Right ventricle myocardium inferior (tissue), 1 donor: ENCODE measurements at regions of chr7 and their contacts with region 1.

Region 1: GRCh38 chr7:135662373-135663114 is at the start of gene STMP1:
- DNase-seq: peak; percentile 98
- ATAC-seq: peak; percentile 98
- total RNA-seq, gene STMP1: 27.4 TPM

Region 2: DNA sequence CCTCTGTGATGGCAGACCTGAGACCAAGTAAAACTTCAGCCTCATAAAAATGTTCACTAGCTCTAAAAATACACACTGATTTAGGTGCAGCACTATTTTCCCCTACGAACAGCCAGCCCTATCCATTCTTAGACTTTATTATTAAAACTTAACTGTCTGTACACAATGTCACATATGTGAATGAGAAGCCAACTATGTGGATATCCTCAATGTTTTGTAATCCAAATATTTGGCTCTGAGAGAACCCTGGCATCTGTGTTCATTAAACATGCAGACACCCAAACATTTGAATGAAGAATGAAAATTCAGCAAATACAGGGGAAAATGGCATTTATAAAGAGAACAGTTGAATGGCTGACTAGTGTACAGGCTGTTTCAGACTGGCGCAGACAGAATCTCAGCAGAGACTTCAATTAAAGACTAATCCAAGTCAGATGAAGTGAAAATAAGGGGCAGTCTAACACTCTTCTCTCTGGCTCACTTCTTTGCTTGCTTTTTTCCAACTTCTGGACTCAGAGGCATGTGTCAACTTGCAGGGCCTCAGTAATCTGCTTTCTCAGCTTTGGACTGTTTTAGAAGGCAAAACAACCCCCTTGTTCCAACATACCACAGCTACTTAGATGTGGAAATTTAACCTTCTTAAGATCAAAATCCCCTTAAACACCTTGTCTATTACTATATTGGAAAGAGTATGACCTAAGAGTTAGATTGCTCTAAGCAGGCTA is 133.5 kb after region 1 on chr7:
- intact Hi-C with region 1: loop called (anchors 2 kb)
- DNase-seq: no peak
- ATAC-seq: no peak

Region 3: DNA sequence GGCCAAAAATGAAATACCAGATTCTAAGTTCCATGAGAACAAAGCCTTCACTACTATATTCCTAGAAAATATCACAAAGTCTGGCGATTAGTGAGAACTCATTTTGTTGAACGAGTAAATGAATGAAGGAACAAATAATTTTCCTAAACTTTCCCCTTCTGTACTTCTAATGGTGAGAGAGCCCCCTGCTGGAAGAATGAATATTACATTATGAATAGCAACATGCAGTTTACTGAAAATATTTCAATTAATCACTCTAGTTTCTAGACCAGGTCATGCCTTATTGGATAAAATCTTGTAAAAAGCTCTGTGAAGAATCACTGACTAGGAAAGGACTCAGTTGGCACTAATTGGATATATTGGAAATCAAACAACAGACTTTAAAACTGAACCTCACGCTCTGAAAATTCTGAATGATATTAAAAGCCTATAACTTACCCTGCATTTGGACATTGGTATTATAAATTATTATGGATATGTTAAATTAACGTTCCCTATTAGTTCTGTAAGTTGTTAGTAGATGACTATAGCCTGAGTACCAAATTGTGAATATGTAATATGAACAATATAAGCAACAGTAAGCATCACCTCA is 347.0 kb after region 1 on chr7:
- intact Hi-C with region 1: loop called (anchors 10 kb)
- DNase-seq: no peak
- ATAC-seq: no peak